Prostate gland (tissue), 2 donors: ENCODE measurements at regions of chr11 and their contacts with region 1.

Region 1: DNA sequence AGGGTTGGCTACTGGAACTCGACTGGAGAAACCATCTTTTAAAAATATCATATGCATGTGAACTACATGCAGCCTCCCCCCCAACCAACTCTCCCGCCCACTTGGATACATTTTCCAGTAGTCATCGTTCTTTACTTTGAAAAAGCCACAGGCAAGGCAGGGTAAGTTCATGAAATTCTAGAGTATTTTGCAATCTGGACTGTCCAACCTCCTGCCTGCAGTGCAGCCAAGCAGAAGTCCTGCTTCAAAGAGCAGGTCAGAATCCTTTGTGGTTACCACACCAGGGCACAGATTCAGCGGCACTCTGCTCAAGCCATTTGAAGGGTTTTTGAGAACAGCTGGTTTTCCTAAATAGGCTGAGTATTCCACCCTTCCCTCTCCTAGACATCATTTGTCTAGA is 12.1 kb downstream of the ELF5 start:
- DNase-seq: no peak
- H3K4me3 ChIP-seq: no peak overlapping the region
- H3K27ac ChIP-seq: no peak overlapping the region
- H3K4me1 ChIP-seq: no peaks in the 10 kb centered on the region
- H3K27me3 ChIP-seq: no peaks in the 10 kb centered on the region
- CTCF ChIP-seq: no peak
- POLR2A ChIP-seq: no peak

Region 2: DNA sequence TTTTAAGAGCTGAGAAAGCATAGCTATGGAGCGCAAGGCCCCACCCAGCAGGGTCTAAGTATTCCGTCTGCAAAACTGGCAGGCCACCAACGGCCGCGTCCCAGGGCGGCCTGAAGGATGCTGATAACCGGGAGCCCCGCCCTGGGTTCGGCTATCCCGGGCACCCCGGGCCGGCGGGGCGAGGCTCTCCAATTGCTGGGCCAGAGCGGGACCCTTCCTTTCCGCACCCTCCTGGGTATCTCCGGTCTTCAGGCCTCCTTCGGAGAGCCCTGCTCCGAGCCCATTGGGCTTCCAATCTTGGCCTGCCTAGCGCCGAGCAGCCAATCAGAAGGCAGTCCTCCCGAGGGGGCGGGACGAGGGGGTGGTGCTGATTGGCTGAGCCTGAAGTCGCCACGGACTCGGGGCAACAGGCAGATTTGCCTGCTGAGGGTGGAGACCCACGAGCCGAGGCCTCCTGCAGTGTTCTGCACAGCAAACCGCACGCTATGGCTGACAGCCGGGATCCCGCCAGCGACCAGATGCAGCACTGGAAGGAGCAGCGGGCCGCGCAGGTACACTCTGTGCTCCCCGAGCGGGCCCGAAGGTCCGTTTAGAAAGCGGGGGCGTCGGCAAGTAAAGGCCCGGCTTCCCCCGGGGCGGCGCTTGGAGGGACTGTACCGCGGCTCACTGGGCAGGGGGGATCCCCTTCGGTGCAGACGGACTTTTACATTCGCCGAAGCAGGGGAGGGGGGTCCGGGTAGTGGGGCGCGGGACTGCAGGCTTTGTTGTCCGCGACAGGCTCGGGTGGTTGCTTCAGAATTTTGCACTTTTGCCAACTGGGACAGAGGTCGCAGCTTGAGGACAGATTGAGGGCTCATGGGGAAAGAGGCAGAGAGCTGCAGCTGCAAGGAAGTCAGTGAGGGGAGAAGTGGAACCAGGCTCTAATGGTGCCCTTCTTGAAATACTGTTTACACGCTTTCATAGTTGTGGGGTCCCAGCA is 62.7 kb before region 1 on chr11 and contains the start of gene CAT:
- intact Hi-C with region 1: no loop called
- DNase-seq: peak; percentile 97
- H3K4me3 ChIP-seq: peak within 1 kb of the TSS; percentile 69 to 84
- H3K27ac ChIP-seq: peak within 1 kb of the TSS; percentile 79 to 82
- H3K4me1 ChIP-seq: no peaks in the 10 kb centered on the region
- H3K27me3 ChIP-seq: no peaks in the 10 kb centered on the region
- CTCF ChIP-seq: no peak
- POLR2A ChIP-seq: peak; percentile 70
- total RNA-seq, gene CAT: 67.3 to 167 TPM

Region 3: DNA sequence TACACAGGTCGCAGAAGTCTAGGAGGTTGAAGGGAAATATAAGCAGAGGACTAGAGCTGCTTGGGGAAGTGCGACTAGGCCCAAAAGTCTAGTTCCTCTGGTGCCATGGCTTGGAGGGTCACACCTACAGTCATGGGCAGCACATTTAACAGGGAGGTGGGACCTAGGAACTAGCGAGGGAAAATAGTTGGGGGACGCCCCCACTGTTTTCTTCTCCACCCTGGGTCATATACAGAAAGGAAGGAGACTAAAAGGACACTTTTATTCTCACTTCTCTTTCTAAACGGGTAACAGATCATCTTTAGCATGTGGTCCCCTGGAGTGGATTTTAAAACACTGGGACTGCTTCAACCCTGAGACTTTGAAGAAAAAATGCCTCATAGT is 398.1 kb after region 1 on chr11:
- intact Hi-C with region 1: loop called (anchors 5 kb)
- DNase-seq: no peak
- H3K4me3 ChIP-seq: no peak overlapping the region
- H3K27ac ChIP-seq: no peak overlapping the region
- H3K4me1 ChIP-seq: no peaks in the 10 kb centered on the region
- H3K27me3 ChIP-seq: no peaks in the 10 kb centered on the region
- CTCF ChIP-seq: no peak
- POLR2A ChIP-seq: no peak